Sigmoid colon (tissue), 7 donors: ENCODE measurements at regions of chr6 and their contacts with region 1.

Region 1: DNA sequence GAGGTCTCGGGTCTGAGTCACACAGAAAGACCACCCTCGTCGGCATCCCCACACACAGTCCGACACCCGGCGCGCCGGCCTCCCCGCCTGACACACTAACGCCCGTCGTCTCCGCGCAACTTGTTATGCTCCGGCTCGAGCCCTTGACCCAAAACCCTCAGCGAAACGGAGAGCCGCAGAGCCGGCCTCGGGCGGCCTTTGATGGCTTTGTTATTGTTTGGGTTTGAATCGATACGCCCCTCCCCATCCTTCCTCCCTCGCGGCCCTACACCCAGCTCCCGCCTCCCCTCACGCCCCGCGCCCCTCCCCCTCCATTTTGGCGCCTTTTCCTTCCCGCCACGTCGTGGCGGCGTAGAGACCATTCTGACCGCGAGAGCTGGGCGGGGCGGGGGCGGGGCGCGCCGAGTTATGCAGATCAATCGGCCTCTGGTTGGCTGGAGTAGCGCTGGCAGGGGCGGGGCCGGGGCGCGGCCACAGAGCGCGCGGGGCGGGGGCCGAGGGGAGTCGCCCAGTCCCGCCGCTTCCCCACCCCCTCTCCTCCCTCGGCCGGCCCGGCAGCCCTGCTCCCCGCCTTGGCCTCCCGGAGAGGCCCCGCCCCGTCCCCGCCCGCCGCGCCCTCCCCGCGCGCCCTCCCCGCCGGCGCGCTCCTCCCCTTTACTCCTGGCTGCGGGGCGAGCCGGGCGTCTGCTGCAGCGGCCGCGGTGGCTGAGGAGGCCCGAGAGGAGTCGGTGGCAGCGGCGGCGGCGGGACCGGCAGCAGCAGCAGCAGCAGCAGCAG is at the start of gene PIM1:
- DNase-seq: peak; percentile 99
- H3K4me3 ChIP-seq: peak within 1 kb of the TSS; percentile 88 to 97 (median 94)
- H3K27ac ChIP-seq: peak within 1 kb of the TSS; percentile 97 to 99 (median 98)
- H3K4me1 ChIP-seq: peaks cover 0 to 40% (median 34%) of the 10 kb centered on the region in 4 donors
- H3K27me3 ChIP-seq: no peaks in the 10 kb centered on the region
- CTCF ChIP-seq: no peak
- EP300 ChIP-seq: peak in 2 of 4 donors; percentile 7 to 32
- POLR2A ChIP-seq: peak; percentile 58 to 79
- total RNA-seq, gene PIM1: 17.1 to 103 (median 30.5) TPM

Region 2: DNA sequence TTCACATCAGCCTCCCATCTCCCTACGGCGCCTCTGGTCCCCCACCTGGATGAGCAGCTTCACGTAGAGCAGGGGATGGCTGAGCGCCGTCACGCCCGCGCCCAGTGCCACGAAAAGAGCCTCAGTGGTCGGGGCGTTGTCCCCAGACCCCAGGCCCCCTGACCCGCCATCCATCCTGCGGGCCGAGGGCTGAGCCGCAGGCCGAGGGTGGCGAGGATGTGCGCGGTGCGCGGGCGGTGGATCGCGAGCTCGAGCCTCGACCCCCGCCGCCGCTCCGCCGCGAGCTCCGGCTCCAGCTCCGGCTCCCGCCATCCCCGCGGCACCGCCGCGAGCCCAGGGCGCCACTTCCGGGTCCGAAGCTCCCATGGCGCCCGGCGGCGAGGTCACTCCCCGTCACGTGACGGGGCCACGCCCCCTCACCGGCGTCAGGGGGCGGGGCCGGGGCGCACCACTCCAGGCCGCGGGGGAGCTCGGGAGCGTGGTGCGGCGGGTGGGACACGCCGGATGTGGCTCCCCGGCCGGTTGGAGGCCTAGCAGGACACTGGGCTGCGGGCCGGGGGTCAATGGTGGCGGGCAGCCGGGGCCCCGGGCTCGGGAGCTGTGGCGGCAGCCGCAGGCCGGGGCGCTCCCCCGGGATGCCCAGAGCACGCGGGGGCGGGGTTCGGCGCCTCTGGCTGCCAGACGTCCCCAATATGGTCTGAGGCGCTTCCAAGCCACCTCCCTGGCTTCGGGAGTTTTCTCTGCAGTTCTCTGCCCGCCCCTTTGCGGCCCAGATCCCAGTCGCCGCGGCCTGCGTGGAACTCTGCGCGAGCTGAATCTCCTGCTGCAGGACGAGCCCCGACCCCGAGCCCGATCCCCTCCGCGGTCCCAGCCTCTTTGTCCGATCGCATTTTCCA is 183.6 kb before region 1 on chr6 and contains the start of gene MTCH1:
- intact Hi-C with region 1: loop called (anchors 2 kb)
- DNase-seq: peak; percentile 97
- H3K4me3 ChIP-seq: peak within 1 kb of the TSS; percentile 76 to 100 (median 94)
- H3K27ac ChIP-seq: peak within 1 kb of the TSS; percentile 95 to 99 (median 98)
- H3K4me1 ChIP-seq: peaks cover 0 to 55% (median 50%) of the 10 kb centered on the region in 4 donors
- H3K27me3 ChIP-seq: no peaks in the 10 kb centered on the region
- CTCF ChIP-seq: no peak
- EP300 ChIP-seq: no peak
- POLR2A ChIP-seq: peak; percentile 76 to 78
- total RNA-seq, gene MTCH1: 163 to 198 (median 195) TPM

Region 3: DNA sequence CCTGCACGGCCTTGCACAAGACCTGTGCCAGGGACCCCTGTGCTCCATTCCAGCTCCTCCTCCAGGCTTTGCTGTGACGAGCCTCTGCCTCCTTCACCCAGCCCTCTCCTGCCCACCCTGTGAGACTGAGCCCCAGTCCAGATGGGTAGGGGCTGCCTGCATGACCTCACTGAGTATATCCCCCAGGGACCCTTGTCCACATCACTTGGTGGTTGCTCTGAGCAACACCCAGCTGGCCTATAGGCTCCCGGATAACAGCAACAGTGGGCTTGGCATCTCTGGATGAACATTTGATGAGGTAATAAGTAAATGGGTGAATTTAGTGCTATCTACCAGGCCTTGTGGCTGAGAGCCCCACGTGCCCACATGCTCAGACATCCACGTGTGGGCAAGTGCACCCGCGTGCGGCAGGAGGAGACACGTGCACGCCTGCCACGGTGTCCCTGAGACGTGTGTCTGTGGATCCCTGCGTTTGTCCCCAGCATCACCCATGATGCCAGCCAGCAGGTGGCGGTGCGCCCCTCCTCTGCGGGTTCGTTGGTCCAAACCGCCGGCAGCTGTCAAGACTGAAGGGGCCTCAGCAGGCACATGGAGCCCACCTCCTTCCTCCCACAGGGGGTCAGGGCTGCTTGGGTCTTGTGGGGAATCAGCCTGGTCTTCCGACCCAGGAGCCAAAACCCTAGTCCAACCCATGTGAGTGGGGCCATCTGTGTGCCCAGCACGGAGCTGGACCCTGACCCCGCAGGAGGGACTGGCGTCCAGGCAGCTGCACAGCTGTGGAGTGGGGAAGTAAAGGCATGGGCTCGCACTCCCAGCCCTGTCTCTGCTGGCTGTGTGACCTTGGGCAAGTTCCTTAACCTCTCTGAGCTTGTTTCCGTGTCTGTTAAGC is 118.3 kb before region 1 on chr6:
- intact Hi-C with region 1: loop called (anchors 1 kb)
- DNase-seq: peak; percentile 94
- H3K4me3 ChIP-seq: no peak overlapping the region
- H3K27ac ChIP-seq: peak overlapping the region in 1 of 4 donors; percentile 51
- H3K4me1 ChIP-seq: peaks cover 0 to 23% (median 9%) of the 10 kb centered on the region in 4 donors
- H3K27me3 ChIP-seq: no peaks in the 10 kb centered on the region
- CTCF ChIP-seq: peak; percentile 91 to 95 (median 94)
- EP300 ChIP-seq: no peak
- POLR2A ChIP-seq: no peak

Region 4: GRCh38 chr6:37077905-37078296 is 91.8 kb before region 1 on chr6:
- intact Hi-C with region 1: no loop called
- DNase-seq: peak; percentile 94
- H3K4me3 ChIP-seq: peak overlapping the region in 1 of 4 donors; percentile 19
- H3K27ac ChIP-seq: peak overlapping the region; percentile 67 to 85 (median 77)
- H3K4me1 ChIP-seq: peaks cover 0 to 22% (median 14%) of the 10 kb centered on the region in 4 donors
- H3K27me3 ChIP-seq: no peaks in the 10 kb centered on the region
- CTCF ChIP-seq: no peak
- EP300 ChIP-seq: peak in 1 of 4 donors; percentile 30
- POLR2A ChIP-seq: no peak

Region 5: DNA sequence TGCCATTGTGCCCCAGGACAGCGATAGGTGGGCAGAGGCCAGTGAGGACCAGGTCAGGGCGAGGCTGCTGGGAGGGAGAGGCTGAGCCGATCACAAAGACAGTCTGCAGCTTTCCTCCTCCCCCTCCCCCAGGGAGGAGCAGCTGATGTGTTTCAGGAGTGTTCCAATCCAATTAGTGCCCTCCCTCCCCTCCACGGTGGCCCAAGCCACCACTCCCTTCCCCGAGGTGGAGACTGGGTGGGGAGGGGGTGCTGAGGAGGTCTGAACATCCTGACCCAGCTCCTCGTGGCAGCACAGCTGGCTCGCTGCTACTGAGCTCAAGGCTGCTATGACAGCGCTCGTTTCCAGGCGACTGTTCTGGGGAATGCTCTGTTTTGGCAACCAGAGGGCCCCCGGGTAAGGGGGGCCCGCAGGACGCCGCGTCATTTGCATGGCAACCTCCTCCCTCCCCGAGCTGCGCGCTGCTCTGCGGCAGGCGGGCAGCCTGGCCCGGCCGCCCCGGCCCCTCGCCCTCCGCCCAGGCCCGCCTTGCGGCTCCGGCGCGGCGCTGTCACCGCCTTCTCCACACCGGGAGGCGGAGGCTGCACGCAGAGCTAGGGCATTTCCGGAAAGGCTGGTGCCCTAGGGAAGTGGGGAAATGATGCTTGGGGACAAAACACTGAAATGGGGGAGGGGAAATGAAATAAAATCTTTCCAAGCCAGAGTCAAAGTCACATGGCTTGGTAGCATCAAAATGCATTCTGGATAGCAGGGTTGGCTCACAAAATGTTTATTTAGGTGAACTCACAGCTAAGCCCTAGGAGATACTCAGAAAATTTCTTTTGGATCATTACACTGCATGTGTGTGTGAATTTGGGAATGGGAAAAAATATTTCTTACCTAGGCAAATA is 67.2 kb before region 1 on chr6:
- intact Hi-C with region 1: loop called (anchors 2 kb)
- DNase-seq: peak; percentile 96
- H3K4me3 ChIP-seq: peak overlapping the region; percentile 18 to 50 (median 42)
- H3K27ac ChIP-seq: peak overlapping the region; percentile 79 to 87 (median 84)
- H3K4me1 ChIP-seq: peaks cover 0 to 24% (median 20%) of the 10 kb centered on the region in 4 donors
- H3K27me3 ChIP-seq: no peaks in the 10 kb centered on the region
- CTCF ChIP-seq: no peak
- EP300 ChIP-seq: peak in 3 of 4 donors; percentile 31 to 76 (median 59)
- POLR2A ChIP-seq: no peak

Region 6: DNA sequence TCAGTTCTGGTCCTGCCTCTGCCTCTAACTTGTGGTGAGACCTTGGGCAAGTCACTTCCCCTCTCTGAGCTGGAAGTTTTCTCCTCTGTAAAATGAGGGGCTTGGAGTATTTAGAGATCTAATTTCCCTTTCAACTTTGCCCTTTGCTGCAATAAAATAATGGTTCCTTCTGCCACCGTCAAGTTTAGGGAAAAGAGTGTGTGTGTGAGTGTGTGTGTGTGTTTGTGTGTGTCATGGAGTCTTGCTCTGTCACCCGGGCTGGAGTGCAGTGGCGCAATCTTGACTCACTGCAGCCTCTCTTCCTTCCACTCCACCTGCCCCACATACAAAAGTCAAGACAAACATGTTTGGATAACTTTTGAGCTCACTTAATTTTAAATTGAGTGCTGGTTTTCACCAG is 39.0 kb before region 1 on chr6:
- intact Hi-C with region 1: loop called (anchors 1 kb)
- DNase-seq: peak; percentile 88
- H3K4me3 ChIP-seq: no peak overlapping the region
- H3K27ac ChIP-seq: peak overlapping the region; percentile 86 to 97 (median 93)
- H3K4me1 ChIP-seq: peaks cover 0 to 80% (median 54%) of the 10 kb centered on the region in 4 donors
- H3K27me3 ChIP-seq: no peaks in the 10 kb centered on the region
- CTCF ChIP-seq: no peak
- EP300 ChIP-seq: peak in 1 of 4 donors; percentile 10
- POLR2A ChIP-seq: no peak

Region 7: DNA sequence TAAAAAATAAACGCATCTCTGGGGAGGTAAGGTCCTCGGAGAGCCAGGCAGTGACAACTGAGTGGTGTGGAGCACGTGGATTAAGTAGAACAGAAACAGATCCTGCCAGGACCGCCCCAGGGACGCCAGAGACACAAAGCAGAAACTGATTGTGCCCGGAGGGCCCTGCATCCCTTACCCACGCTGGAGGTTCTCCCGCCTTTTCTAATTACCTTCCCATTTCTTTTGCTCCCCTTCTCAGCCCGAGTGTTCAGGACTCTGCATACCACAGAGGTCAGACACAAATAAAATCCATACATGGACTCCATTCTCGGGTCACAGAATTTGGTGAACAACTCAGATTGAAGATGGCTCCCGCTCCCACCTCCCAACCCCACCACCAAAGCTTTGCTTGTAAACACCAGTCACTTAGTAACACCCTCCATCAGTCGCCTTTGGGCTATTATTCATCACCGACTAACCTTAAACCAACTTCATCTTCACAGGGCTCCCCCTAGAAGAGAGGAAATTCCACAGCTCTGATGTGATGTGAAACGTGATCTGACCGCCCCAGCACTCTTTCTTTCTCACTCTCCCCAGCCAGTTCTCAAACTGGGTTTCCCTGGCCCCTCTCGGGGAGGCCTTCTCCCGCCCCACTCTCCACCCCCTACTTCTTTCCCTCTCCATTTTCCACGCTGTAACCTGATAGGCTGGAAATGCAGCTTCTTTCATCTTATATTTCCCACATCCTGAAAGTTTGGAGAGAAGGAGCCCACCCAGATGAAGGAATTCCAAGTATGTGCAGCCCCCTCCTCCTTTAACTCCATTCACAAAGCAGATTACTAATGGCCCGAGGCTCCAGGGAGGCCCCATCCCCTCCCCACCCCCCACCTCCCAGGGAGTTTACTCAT is 32.2 kb before region 1 on chr6:
- intact Hi-C with region 1: loop called (anchors 2 kb)
- DNase-seq: peak; percentile 89
- H3K4me3 ChIP-seq: peak overlapping the region in 2 of 4 donors; percentile 4 to 5
- H3K27ac ChIP-seq: peak overlapping the region; percentile 86 to 97 (median 93)
- H3K4me1 ChIP-seq: peaks cover 0 to 90% (median 55%) of the 10 kb centered on the region in 4 donors
- H3K27me3 ChIP-seq: no peaks in the 10 kb centered on the region
- CTCF ChIP-seq: no peak
- EP300 ChIP-seq: peak in 1 of 4 donors; percentile 74
- POLR2A ChIP-seq: no peak

Region 8: DNA sequence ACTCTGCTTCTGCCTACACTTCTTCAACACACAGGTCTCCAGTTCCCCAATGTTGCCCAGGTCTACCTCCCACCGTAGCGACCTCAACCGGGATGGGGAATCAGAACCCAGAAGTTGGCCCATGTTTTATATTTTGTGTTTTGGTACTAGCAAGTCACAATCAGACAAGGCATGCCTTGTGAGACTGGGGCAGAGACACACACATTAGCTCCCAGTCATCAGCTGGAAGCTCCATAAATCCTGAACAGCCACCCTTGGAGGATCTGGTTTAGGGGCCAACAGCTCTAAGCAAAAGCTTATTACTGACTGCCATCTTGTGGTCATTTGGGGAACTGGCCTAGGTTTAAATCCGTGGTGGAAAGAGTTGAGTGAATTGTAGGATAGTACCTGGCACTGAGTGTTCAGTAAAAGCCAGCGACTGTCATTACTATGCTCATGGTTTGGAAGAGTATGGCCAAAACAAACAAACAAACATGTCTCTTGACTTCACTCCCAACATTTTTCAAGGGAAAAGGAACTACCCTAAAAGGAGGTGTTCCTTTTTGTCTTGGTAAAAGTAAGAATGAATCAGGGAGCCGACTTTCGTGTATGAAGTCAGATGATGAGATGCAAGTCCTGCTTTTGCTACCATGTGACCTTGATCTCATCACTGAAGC is 40.8 kb after region 1 on chr6:
- intact Hi-C with region 1: loop called (anchors 2 kb)
- DNase-seq: peak; percentile 85
- H3K4me3 ChIP-seq: no peak overlapping the region
- H3K27ac ChIP-seq: no peak overlapping the region
- H3K4me1 ChIP-seq: peaks cover 0 to 4% (median 0%) of the 10 kb centered on the region in 4 donors
- H3K27me3 ChIP-seq: no peaks in the 10 kb centered on the region
- CTCF ChIP-seq: peak; percentile 89 to 98 (median 96)
- EP300 ChIP-seq: no peak
- POLR2A ChIP-seq: no peak